Posterior cingulate gyrus (tissue), 11 donors: ENCODE measurements at regions of chr20 and their contacts with region 1.

Region 1: GRCh38 chr20:17536944-17537444 is 5.8 kb upstream of the BFSP1 start:
- DNase-seq: peak in 7 of 10 donors; percentile 34 to 93 (median 65)

Region 2: DNA sequence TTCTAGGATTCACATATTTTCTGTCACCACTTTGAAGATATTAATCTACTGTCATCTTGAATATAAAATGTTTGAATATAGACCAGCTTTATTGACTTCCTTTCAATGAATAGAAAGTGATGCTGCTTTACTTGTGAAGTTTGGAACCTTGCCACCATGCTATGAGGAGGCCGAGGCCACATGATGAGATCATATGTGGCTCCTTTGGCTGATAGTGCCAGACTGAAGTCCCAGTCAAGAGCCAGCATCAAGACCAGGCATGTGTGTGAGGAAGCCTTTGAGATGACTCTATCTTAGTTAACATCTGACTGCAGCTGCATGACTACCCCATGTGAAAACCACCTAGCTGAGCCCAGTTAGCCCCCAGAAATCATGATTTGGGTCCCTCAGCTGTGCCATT is 619.4 kb before region 1 on chr20:
- intact Hi-C with region 1: no loop called
- DNase-seq: no peak

Region 3: DNA sequence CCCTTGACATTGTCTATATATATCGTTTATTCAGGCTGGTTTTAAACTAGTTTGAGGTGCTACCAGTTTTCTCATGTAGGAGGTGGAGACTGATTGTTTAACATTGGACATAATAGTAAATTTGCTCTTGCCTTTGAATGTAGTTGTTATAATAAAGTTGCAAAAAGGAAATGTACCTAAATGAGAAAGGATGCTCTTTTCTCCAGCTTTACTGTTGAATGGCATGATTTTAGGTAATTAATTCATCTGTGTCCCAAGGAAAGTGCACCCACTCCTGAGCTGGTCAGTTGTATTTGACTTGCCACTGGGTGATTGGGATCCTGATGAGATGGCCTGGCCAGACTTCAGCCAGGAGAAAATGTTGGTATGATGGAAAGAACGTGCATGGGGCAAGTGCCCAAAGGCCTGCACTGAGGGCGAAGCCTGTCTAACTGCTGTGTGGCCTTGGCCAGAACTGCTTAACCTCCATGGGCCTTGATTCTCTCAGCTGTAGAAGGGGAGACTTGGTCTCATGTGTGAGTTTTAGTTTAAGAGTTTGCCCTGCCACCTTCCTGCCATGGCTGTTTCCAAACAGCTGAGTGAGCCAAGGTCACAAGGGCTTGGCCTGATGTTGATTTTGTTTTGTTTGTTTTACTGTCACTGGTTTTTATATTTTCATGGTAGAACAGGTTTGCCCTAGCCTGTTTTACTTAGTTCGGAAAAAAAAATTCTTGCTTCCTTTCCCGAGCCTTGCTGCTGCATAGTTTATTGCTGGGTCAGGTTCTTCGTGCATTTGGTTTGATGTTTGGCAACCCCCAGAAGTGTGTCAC is 68.1 kb after region 1 on chr20:
- intact Hi-C with region 1: no loop called
- DNase-seq: no peak

Region 4: DNA sequence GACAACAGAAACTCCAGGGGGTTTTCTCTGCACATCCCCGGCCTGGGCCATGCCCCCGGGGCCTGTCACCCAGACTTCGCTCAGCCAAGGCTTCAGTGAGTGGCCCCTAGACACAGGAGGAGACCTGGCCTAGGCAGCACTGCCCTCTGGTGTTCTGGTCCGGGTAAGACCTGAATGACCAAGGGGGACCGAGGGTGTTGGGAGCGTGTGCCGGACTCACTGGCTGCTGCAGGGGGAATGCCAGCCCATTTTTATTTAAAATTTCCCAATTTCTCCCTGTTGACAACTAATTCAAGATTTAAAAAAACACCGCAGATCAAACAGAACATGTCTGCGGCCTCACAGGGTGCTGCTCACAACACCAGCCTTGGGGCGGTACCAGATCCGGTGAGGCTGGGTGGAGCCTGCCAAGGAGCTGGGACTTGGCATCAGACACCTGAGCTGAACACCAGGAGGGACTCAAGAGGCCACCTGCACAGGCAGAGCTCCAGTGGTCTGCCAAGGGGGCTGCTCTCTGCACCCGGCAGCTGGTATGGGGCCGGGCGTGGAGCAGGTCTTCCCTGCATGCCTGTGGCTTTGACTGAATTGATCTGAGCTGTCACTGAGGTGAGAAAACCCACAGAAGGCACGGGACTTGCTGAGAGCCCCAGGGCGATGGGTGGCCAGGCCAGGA is 80.7 kb after region 1 on chr20:
- intact Hi-C with region 1: loop called (anchors 1 kb)
- DNase-seq: peak in 8 of 10 donors; percentile 66 to 95 (median 72)

Region 5: DNA sequence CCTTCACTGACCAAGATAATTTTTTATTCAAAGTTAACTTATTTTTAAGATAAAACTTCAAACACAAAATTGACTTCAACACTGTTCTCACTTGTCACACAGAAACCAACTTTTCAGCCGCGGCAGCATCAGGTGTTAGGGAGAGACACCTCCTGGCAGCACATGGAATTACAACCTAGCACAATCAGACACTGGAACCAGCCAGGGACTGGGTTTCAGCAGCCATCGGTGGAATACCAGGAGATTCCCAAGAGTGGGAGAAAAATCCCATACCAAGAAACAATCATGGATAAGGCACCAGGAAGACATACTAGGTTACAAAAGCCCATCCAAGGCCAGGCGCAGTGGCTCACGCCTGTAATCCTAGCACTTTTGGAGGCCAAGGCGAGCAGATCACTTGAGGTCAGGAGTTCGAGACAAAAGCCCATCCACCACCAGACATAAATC is 361.6 kb after region 1 on chr20:
- intact Hi-C with region 1: loop called (anchors 2 kb)
- DNase-seq: peak in 7 of 10 donors; percentile 55 to 93 (median 70)

Region 6: DNA sequence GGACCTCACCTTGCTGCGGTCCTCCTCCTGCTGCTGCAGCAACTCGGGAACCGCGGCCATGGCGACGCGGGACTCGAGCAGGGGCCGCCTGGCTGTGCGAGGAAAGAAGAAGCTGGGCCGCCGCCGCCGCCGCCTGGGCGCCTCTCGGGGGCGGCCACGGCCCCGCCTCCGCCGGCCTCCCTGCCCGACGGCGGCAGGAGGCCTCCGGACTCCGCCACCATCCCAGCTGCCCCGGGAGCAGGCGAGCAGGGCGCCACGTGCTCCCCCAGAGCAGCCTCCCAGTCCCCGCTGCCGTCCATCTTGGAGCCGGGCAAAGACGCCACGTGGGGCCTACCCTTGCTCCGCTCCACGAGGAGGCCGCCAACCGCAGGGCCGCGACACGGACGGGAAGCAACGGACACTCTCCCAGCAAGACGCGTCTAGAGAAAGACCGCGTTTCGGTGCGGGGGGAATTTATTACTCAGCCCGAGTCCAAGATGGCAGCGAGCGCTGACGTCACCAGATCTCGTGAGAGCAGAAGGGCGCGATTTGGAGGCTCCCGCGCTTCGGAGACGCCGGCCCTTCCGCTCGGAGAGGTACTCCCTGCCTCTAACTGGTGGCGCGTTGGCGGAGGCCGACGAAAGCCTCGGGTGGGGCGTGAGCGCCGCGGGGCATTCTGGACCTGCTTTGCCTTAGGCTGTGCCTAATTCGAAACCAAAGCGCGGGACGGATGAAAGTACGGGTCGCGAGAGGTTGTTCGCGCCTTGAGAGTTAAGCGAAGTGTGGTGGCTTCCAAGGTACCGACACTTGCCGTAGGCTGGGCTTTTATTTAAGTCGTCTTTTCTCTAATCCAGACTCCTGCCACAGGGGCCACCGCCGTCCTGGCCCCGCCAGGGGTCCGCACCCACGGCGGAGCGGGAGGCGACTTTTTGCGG is 431.6 kb after region 1 on chr20 and contains the starts of genes MGME1 and SNX5:
- intact Hi-C with region 1: loop called (anchors 10 kb)
- DNase-seq: peak; percentile 97 to 100 (median 100)